ENCODE measurements at regions of chr2 and their contacts with region 1.

Region 1: DNA sequence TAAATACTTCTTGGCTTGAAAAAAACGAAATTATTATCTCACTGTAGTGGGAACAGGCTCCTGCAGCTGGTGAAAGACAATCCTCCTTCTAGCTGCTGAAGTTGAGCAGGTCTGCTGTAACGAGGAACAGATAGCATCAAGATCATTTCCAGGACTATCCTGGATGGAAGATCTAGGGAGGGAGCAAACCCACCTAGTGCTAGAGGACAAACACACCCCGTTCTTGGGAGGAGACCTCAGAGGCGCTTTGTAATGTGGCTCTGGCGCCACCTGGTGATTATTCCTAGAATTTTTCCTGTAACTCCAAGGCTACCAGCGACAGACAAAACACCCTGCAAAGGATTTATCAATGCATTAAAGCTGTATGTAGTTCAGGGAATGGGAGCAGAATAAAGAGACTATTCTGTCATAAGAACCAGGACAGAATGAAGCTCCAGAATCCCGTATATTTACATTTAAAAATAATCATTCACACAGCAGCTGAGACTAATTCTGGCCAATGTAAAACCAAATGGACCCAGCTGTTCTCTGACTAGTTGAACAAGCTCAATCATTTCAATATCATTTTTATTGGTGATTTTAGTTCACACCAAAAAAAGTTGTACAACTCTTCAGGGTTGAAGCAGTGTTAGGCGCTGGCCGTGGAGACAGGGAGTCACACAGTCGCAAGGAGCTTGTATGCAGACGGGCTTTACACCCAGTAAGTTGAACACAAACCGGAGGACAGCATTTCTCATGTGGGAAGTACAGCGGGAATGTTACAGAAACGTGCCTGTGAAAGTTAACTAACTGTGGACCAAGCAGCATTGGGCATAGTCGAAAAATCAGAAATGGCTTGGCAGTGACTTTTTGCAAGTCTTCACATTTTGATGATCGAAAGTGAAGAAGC is 290.3 kb downstream of the TRIB2 start:
- DNase-seq: peak; percentile 78
- H3K4me3 Mint-ChIP-seq: no peak overlapping the region
- H3K27ac Mint-ChIP-seq: no peak overlapping the region
- H3K4me1 Mint-ChIP-seq: peaks cover 18% of the 10 kb centered on the region
- H3K27me3 Mint-ChIP-seq: no peaks in the 10 kb centered on the region
- CTCF ChIP-seq: peak; percentile 88

Region 2: GRCh38 chr2:11784747-11785610 is 1222.1 kb before region 1 on chr2:
- CTCF ChIA-PET with region 1: interaction called, 14 read pairs
- POLR2A ChIA-PET with region 1: no interaction called
- intact Hi-C with region 1: no loop called
- DNase-seq: peak; percentile 21
- H3K4me3 Mint-ChIP-seq: no peak overlapping the region
- H3K27ac Mint-ChIP-seq: no peak overlapping the region
- H3K4me1 Mint-ChIP-seq: no peaks in the 10 kb centered on the region
- H3K27me3 Mint-ChIP-seq: no peaks in the 10 kb centered on the region
- CTCF ChIP-seq: peak; percentile 92

Region 3: DNA sequence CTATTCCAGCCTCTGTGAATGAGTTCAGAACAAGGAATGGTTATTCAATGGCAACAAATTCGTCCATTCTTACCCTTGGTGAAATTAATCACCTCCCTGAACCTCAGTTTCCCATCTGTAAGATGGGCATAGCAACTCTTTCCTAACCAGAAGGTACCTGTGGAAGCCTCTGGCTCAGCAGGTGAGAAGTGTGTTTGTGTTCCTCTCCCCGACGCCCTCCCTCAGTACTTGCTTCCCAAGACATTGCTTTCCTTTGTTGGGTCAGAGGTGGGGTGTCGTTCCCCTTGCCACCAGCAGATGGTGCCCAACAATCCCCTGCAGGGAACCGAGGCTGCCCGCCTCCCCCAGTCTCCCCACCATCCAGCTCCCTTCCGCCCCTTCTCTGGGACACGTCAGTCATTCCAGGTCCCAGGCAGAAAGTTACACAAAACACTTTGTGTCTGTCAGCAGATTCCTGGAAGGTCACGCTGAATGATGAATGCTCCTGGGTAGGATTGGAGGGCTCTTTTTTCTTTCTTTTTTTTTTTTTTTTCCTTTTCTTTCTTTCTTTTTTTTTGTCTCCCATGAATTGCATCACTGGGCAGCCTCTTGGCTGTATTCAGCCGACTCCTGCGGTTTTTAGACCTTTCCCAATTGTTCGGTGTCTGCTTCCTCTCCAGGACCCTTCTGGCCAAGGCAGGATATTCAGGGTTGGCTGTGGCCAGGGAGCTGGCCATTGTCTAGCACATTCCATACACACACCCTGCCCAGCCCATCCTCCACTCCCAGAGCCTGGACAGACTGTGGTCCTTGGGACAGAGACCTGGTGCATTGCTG is 1143.4 kb before region 1 on chr2:
- CTCF ChIA-PET with region 1: interaction called, 12 read pairs
- POLR2A ChIA-PET with region 1: no interaction called
- intact Hi-C with region 1: loop called (anchors 1 kb)
- DNase-seq: peak; percentile 96
- H3K4me3 Mint-ChIP-seq: peak overlapping the region; percentile 9
- H3K27ac Mint-ChIP-seq: peak overlapping the region; percentile 80
- H3K4me1 Mint-ChIP-seq: peaks cover 21% of the 10 kb centered on the region
- H3K27me3 Mint-ChIP-seq: no peaks in the 10 kb centered on the region
- CTCF ChIP-seq: peak; percentile 92

Region 4: DNA sequence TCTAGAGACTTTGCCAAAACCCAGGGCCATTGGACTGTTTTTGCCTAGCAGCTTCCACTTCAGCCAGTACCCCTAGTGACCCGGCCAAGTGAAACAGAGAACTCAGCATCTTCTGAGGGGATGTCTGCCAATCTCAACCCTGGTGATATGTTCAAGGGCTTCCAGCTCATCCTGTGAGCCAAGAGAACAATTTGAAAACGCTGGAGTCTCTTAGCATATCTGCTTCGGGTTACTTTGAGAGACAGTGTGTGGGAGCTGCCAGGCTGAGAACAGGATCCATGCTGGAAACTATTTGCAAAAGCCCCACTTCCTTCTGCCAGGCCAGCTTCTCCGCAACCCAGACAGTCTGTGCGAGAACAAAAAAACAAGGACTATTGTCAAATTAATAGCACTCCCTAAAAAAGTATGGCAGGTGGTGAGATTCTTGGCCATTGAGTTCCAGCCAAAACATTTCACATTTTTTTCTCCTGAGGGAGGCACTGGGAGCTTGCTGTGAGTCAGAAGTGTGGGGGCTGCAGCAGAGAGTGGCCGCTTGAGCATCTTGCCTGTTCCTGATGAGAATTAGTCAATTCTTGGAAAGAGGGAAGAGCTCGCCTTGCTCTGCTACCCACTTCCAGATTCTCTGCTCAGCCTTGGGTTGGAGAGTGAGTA is 686.0 kb before region 1 on chr2:
- CTCF ChIA-PET with region 1: interaction called, 8 read pairs
- POLR2A ChIA-PET with region 1: interaction called, 3 read pairs
- intact Hi-C with region 1: loop called (anchors 10 kb)
- DNase-seq: peak; percentile 90
- H3K4me3 Mint-ChIP-seq: no peak overlapping the region
- H3K27ac Mint-ChIP-seq: peak overlapping the region; percentile 71
- H3K4me1 Mint-ChIP-seq: peaks cover 51% of the 10 kb centered on the region
- H3K27me3 Mint-ChIP-seq: no peaks in the 10 kb centered on the region
- CTCF ChIP-seq: no peak

Region 5: GRCh38 chr2:12733846-12734245 is 273.2 kb before region 1 on chr2:
- CTCF ChIA-PET with region 1: interaction called, 10 read pairs
- POLR2A ChIA-PET with region 1: no interaction called
- intact Hi-C with region 1: no loop called
- DNase-seq: peak; percentile 57
- H3K4me3 Mint-ChIP-seq: no peak overlapping the region
- H3K27ac Mint-ChIP-seq: peak overlapping the region; percentile 27
- H3K4me1 Mint-ChIP-seq: peaks cover 7% of the 10 kb centered on the region
- H3K27me3 Mint-ChIP-seq: no peaks in the 10 kb centered on the region
- CTCF ChIP-seq: no peak

Region 6: DNA sequence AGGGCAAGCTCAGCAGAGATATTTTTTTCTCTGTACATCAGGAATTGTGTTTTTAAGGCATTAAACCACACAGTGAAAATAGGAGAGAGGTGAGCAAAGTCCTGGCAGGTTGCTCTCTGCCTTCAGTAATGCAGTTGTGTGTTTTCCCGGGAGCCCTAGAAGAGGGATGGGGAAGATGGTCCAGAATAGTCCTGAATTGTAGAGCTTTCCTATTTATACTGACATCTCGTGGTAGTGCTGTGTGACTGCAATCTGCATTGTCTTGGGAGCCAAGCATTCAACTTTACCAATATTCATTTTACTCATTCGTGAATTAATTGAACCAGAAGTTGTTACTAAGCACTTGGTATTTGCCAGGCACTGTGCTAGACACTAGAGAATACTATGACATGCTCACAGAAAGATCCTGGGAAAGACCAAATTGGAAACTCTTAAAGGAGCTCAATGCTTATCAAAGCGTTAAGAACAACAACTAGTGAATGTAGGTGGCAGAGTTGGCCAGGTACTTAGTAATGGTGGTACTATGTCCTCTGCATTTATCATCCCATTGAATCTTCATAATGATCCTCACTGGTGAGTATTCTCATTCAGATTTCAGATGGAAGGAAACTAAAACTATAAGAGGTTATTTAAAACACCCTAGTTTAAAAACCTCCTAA is 75.8 kb before region 1 on chr2:
- CTCF ChIA-PET with region 1: interaction called, 63 read pairs
- POLR2A ChIA-PET with region 1: no interaction called
- intact Hi-C with region 1: loop called (anchors 1 kb)
- DNase-seq: peak; percentile 56
- H3K4me3 Mint-ChIP-seq: no peak overlapping the region
- H3K27ac Mint-ChIP-seq: no peak overlapping the region
- H3K4me1 Mint-ChIP-seq: peaks cover 19% of the 10 kb centered on the region
- H3K27me3 Mint-ChIP-seq: no peaks in the 10 kb centered on the region
- CTCF ChIP-seq: peak; percentile 87

Region 7: GRCh38 chr2:12970861-12971260 is 36.2 kb before region 1 on chr2:
- CTCF ChIA-PET with region 1: interaction called, 22 read pairs
- POLR2A ChIA-PET with region 1: no interaction called
- intact Hi-C with region 1: no loop called
- DNase-seq: peak; percentile 70
- H3K4me3 Mint-ChIP-seq: no peak overlapping the region
- H3K27ac Mint-ChIP-seq: no peak overlapping the region
- H3K4me1 Mint-ChIP-seq: peaks cover 5% of the 10 kb centered on the region
- H3K27me3 Mint-ChIP-seq: no peaks in the 10 kb centered on the region
- CTCF ChIP-seq: no peak

Measured in MCF 10A (cell line).